HepG2 (cell line): ENCODE measurements at regions of chr9 and their contacts with region 1.

Region 1: DNA sequence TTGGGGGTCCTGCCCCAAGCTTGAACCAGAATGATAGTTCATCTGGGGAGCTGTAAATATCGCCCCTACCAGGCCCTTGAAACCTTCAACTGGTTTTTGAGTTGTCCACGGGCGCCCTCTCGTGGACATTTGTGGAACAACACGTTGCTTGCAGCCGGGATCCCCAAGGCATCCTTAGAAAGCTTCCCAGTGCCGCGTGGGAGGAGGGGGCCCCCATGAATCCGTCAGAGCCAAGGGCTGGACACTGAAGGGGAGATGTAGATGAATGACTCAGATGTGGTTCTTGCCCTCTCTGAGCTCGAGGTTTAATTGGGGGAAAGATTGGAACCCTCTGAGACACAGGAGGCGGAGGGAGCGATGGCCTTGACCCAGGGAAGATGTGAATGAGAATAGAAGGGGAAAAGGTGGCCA is 31.8 kb upstream of the ORM1 start:
- DNase-seq: peak; percentile 61
- ATAC-seq: peak; percentile 64
- H3K4me3 ChIP-seq: no peak overlapping the region
- H3K27ac ChIP-seq: no peak overlapping the region
- H3K4me1 ChIP-seq: no peaks in the 10 kb centered on the region
- H3K27me3 ChIP-seq: no peaks in the 10 kb centered on the region
- CTCF ChIP-seq: peak; percentile 88
- EP300 ChIP-seq: no peak
- POLR2A ChIP-seq: no peak
- RAD21 ChIP-seq: peak; percentile 77

Region 2: GRCh38 chr9:113807173-113808061 is 483.7 kb before region 1 on chr9:
- CTCF ChIA-PET with region 1: no interaction called
- POLR2A ChIA-PET with region 1: no interaction called
- in situ Hi-C with region 1: loop called (anchors 5 kb)
- intact Hi-C with region 1: no loop called
- DNase-seq: peak; percentile 19
- ATAC-seq: peak; percentile 65
- H3K4me3 ChIP-seq: no peak overlapping the region
- H3K27ac ChIP-seq: no peak overlapping the region
- H3K4me1 ChIP-seq: no peaks in the 10 kb centered on the region
- H3K27me3 ChIP-seq: 0 out of 5 replicates have a peak, but pooled peaks cover 0 to 12% of the 10 kb centered on the region in 2 experiments
- CTCF ChIP-seq: peak; percentile 82
- EP300 ChIP-seq: no peak
- POLR2A ChIP-seq: no peak
- RAD21 ChIP-seq: peak; percentile 22; the same call in 1 of the 2 replicates

Region 3: DNA sequence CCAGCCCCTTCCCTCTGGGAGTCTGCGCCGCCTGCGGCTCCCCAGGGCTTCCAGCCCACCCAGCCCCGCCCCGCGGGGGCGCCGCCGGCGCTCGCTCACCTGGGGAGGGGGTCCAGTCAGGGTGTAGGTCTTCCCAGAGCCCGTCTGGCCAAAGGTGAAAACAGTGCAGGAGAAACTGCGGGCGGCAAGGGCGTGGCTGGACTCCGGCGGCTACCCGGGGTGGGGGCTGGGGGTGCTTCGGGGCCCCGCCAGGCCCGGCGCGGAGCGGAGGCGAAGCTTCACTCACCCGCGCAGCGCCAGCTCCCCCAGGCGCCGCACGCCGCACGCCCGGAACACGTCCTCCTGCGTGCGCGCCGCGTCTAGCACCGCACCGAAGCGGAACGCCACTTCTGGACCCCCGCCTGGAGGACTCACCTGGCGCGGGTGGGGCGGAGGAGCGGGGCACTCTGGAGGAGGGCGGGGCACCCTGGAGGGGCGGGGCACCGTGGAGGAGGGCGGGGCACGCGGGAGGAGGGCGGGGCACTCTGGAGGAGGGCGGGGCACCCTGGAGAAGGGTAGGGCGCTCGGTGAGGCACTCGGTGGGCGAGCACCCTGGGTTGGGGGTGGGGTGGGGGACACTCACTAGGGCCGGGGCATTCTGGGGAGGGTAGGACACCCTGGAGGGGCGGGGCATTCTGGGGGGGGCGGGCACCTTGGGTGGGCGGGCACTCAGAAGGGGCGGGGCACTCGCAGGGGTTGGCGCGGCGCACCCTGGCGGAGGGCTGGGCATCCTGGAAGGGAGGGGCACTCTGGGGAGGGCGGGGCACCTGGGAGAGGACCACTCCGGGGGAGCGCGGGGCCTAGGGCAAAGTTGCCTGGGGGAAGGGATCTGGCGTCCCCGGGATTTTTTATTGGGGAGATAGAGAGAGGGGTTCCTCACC is 192.8 kb before region 1 on chr9:
- CTCF ChIA-PET with region 1: no interaction called
- POLR2A ChIA-PET with region 1: no interaction called
- in situ Hi-C with region 1: loop called (anchors 5 kb)
- intact Hi-C with region 1: no loop called
- DNase-seq: no peak
- ATAC-seq: peak; percentile 43
- H3K4me3 ChIP-seq: peak overlapping the region; percentile 45 to 67 (median 49); a peak in 5 of 6 replicates
- H3K27ac ChIP-seq: peak overlapping the region; percentile 55
- H3K4me1 ChIP-seq: peaks cover 53% of the 10 kb centered on the region
- H3K27me3 ChIP-seq: no peaks in the 10 kb centered on the region
- CTCF ChIP-seq: no peak
- EP300 ChIP-seq: no peak
- POLR2A ChIP-seq: no peak
- RAD21 ChIP-seq: no peak

Region 4: DNA sequence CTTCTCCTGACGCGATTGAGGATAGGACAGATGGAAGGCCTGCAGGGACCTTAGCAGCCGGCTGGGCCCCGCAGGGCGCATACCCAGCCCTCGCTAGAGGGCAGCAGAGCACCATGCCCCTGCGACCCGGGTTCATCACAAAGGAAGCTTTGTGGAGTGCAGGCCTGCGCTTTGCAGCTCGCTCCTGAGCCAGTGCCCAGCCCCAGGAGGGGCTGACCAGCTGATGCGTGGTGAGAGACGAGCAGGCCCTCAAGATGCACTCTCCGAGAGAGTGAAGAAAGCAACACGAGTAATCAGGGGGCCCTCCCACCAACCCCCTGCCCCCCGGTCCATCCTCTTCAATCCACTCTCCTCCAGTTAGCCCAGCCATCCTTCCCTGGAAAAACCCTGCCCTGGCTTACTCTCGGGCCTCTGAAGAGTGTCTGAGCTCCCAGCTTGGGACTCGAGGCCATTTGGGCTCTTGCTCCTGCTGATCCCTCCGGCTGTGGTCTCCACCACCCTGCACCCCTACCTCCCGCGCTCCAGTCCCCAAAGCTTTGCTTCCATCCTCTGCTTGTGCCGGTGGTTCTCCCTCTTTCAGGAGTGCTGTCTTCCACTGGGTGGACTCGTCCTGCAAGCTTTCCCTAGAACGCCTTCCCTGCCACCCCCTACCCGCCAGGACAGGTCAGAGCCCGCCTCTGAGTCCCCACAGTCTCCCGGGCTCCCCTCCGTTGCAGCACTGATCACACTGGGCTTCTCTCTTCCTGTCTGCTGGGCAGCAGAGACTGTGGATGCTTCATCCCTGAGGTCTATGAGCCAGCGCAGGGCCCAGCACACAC is 182.8 kb before region 1 on chr9:
- CTCF ChIA-PET with region 1: interaction called, 21 read pairs
- POLR2A ChIA-PET with region 1: interaction called, 11 read pairs
- in situ Hi-C with region 1: no loop called
- intact Hi-C with region 1: loop called (anchors 2 kb)
- DNase-seq: peak; percentile 80
- ATAC-seq: peak; percentile 98
- H3K4me3 ChIP-seq: peak overlapping the region; percentile 40 to 65 (median 40)
- H3K27ac ChIP-seq: no peak overlapping the region
- H3K4me1 ChIP-seq: peaks cover 51% of the 10 kb centered on the region
- H3K27me3 ChIP-seq: no peaks in the 10 kb centered on the region
- CTCF ChIP-seq: peak; percentile 99
- EP300 ChIP-seq: no peak
- POLR2A ChIP-seq: no peak
- RAD21 ChIP-seq: peak; percentile 100